Activated naive CD4-positive, alpha-beta T cell treated with anti-CD3 and anti-CD28 coated beads for 36 hours (primary cell): ENCODE measurements at regions of chr6 and their contacts with region 1.

Region 1: DNA sequence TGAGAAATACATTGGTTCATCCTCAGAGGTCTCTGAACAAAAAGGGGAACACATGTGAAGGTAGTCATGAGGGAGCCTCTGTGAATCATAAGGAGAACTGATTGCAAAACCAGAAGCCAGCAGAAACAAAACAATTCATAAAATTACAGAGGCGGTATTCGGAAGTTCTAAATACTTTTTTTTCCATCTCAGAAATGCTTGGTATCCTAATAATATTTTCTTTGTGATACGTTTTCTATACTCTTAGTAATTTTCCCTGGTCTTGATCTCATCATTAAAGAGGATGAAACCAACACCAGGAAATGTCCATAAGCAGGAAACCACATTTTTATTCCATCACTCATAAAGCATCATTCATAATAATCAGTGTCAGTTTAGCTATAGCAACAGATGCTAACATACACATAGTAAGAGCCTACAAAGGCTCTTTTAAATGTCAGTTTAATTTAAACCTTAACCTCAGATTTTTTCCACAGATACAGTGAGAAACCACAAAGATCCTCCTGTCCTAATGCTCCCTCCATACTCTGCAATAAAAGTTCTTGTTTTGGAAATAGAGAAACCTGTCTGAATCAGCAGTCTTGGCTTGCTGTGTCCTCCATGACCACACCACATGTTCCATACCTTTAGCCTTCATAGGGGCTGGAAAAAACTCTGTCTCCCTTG is 29.2 kb downstream of the SGK1 start:
- DNase-seq: no peak
- H3K4me3 Mint-ChIP-seq: peak overlapping the region; percentile 45
- H3K27ac Mint-ChIP-seq: peak overlapping the region; percentile 90
- H3K4me1 Mint-ChIP-seq: peaks cover 28% of the 10 kb centered on the region
- H3K27me3 Mint-ChIP-seq: no peaks in the 10 kb centered on the region

Region 2: DNA sequence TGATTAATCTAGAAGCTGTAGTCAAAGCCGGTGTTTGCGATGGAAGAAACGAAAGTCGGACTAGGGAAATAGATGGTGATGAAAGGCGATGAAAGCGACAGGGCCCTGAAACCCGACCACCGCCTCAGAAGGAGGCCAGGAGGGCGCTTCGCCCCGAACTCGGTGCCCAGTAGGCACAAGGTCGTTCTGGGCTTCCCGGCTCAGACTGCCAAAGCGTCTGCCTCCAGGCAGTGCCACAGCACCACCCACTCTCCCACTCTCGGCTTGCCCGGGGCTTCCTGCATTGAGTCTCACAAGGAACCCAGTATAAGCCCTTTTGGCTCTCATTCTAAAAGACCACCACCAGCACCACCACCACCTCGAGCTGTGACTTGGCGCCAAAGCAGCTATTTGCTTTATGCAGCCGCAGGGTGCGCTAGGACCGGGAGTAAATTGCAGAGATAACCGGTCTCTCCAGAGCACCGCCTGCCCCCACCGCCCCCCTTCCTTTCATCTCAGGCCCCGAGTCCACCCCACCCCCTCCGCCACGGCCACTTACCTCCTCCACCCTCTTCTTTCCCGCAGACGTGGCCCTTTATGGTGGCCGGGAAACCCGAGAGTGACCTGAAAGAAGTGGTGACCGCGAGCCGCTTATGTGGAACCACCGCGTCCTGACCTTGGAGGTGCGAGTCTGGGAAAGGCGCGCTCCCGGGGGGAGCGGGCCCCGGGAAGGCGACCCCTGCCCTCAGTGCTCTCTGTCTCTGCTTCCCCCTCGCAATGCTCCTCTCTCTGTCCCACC is 397.3 kb before region 1 on chr6:
- CTCF ChIA-PET with region 1: no interaction called
- intact Hi-C with region 1: no loop called
- DNase-seq: peak; percentile 12
- H3K4me3 Mint-ChIP-seq: peak overlapping the region; percentile 68
- H3K27ac Mint-ChIP-seq: no peak overlapping the region
- H3K4me1 Mint-ChIP-seq: peaks cover 43% of the 10 kb centered on the region
- H3K27me3 Mint-ChIP-seq: peaks cover 87% of the 10 kb centered on the region

Region 3: DNA sequence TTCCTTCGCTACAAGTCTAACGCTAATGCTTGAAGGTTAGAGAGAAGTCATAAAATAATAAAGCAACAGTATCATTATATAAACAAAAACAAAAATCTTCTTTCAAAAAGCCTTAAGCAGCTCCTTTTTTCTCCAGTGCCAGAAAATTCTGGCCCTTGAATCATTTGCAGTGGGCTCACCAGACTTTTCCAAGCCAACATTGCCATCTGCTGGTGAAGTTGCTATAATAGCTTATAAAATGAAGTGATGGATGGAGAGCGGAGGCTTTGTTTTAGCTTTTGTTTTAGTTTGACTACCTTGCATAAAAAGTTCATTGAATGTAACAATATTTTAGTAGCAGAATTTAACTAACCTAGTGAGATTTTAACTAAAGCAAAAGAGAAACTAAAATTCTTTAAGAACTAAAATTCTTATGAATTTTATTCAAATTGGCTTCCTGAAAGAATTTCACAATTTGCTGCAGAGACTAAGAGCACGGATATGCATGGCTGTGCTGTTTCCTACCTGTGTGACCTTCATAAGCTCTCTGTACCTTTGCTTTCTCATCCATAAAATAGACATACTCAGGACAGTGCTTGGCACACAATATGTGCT is 191.5 kb before region 1 on chr6:
- CTCF ChIA-PET with region 1: no interaction called
- intact Hi-C with region 1: no loop called
- DNase-seq: peak; percentile 80
- H3K4me3 Mint-ChIP-seq: no peak overlapping the region
- H3K27ac Mint-ChIP-seq: no peak overlapping the region
- H3K4me1 Mint-ChIP-seq: no peaks in the 10 kb centered on the region
- H3K27me3 Mint-ChIP-seq: peaks cover 7% of the 10 kb centered on the region

Region 4: DNA sequence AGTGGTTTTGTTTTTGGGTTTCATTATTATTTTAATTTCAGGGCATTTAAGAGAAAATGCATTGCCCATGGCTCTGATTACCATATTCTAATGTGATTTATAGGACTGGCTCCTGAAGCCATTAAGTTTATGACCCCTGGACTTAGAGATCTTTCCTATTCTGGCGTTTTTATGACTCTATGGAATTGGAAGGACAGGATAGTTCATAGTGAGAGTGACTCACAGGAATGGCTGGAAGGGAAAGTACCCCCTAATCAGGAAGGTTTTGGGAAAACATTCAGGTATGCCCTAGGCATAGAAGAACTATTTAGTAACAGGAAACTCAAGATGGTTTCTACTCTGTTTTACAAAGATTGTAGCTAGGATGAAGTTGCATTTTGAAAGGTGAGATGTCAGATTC is 127.6 kb before region 1 on chr6:
- CTCF ChIA-PET with region 1: no interaction called
- intact Hi-C with region 1: no loop called
- DNase-seq: no peak
- H3K4me3 Mint-ChIP-seq: no peak overlapping the region
- H3K27ac Mint-ChIP-seq: no peak overlapping the region
- H3K4me1 Mint-ChIP-seq: peaks cover 4% of the 10 kb centered on the region
- H3K27me3 Mint-ChIP-seq: no peaks in the 10 kb centered on the region

Region 5: GRCh38 chr6:134235937-134236751 is 52.5 kb before region 1 on chr6:
- CTCF ChIA-PET with region 1: interaction called, 3 read pairs
- intact Hi-C with region 1: loop called (anchors 1 kb)
- DNase-seq: peak; percentile 41
- H3K4me3 Mint-ChIP-seq: peak overlapping the region; percentile 15
- H3K27ac Mint-ChIP-seq: peak overlapping the region; percentile 95
- H3K4me1 Mint-ChIP-seq: peaks cover 57% of the 10 kb centered on the region
- H3K27me3 Mint-ChIP-seq: no peaks in the 10 kb centered on the region

Region 6: DNA sequence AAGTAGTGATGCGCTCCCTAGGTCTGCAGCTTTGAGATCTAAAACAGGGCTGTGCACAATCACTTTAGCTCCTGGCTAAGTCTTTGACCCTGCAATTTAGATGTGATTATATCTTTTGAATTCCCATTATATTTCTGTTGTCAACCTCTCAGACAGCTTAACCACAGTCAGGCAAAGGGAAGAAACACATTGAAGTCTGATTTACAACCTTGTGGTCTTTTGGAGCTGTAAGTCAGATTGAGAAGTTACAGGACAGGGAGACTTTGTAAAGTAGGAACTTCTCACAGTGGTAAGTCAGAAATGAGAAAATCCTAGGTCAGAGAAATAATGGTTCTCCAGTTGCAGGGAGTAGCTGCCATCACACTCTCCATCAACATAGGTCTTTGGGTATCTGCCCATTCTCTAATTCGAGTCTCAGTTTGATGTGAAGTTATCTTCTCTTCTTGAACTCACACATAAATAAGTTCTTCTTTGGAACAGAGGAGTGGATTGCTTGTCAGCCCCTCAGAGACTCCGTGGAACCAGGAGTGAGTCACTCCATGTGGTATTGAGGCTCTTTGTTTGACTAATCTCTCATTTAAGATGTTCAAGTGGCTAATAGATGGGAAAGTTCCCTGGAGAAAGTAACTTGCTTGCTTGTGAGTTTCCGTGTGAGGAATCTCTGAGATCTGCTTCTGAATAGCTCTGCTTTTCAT is 64.3 kb after region 1 on chr6:
- CTCF ChIA-PET with region 1: no interaction called
- intact Hi-C with region 1: loop called (anchors 2 kb)
- DNase-seq: peak; percentile 53
- H3K4me3 Mint-ChIP-seq: no peak overlapping the region
- H3K27ac Mint-ChIP-seq: no peak overlapping the region
- H3K4me1 Mint-ChIP-seq: peaks cover 29% of the 10 kb centered on the region
- H3K27me3 Mint-ChIP-seq: no peaks in the 10 kb centered on the region

Region 7: GRCh38 chr6:134379086-134379485 is 90.4 kb after region 1 on chr6:
- CTCF ChIA-PET with region 1: no interaction called
- intact Hi-C with region 1: loop called (anchors 1 kb)
- DNase-seq: peak; percentile 87
- H3K4me3 Mint-ChIP-seq: peak overlapping the region; percentile 35
- H3K27ac Mint-ChIP-seq: peak overlapping the region; percentile 84
- H3K4me1 Mint-ChIP-seq: peaks cover 40% of the 10 kb centered on the region
- H3K27me3 Mint-ChIP-seq: no peaks in the 10 kb centered on the region

Region 8: GRCh38 chr6:134520181-134521115 is 231.8 kb after region 1 on chr6:
- CTCF ChIA-PET with region 1: no interaction called
- intact Hi-C with region 1: loop called (anchors 5 kb)
- DNase-seq: no peak
- H3K4me3 Mint-ChIP-seq: no peak overlapping the region
- H3K27ac Mint-ChIP-seq: peak overlapping the region; percentile 56
- H3K4me1 Mint-ChIP-seq: peaks cover 57% of the 10 kb centered on the region
- H3K27me3 Mint-ChIP-seq: no peaks in the 10 kb centered on the region